HEK293T (cell line): ENCODE measurements at regions of chr17 and their contacts with region 1.

Region 1: DNA sequence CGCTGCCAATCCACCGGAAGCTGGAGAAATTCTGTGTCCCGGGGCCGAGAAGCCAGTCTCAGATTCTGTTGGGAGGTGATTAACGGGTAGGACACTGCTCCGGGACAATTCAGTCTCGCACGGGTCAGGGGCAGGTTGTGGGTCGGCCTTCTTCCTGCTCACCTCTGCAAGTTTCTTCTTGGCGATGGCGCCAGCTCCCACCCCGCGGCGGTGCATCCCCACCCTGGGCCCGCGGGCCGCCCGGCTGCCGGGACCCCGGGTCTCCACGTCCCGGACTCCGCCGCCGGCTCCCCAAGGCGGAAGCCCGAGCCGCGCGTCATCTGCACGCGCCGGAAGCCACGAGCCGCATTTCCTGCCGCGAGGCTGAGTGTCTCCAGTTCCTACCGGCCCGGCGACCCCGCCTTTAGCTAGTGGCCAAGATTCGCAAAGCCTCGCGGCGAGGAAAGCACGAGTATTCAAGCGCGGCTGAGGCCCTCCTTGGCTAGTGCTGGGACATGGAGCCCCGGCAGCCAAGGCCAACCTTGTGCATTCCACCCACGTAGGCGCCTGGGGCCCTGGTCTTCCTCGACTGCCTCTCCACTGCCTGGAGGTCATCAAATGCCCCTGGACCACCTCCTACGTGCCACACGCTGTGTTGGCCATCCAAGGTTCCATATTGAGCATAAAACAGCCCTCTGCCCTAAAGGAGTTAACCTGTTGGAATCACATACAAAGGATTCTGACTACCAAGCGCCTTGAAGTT is at the start of gene SNF8:
- DNase-seq: peak; percentile 97

Region 2: GRCh38 chr17:48756830-48757251 is 187.8 kb before region 1 on chr17:
- CTCF ChIA-PET with region 1: no interaction called
- POLR2A ChIA-PET with region 1: no interaction called
- DNase-seq: peak; percentile 5

Region 3: GRCh38 chr17:48825446-48826381 is 119.0 kb before region 1 on chr17:
- CTCF ChIA-PET with region 1: no interaction called
- POLR2A ChIA-PET with region 1: no interaction called
- DNase-seq: no peak

Region 4: DNA sequence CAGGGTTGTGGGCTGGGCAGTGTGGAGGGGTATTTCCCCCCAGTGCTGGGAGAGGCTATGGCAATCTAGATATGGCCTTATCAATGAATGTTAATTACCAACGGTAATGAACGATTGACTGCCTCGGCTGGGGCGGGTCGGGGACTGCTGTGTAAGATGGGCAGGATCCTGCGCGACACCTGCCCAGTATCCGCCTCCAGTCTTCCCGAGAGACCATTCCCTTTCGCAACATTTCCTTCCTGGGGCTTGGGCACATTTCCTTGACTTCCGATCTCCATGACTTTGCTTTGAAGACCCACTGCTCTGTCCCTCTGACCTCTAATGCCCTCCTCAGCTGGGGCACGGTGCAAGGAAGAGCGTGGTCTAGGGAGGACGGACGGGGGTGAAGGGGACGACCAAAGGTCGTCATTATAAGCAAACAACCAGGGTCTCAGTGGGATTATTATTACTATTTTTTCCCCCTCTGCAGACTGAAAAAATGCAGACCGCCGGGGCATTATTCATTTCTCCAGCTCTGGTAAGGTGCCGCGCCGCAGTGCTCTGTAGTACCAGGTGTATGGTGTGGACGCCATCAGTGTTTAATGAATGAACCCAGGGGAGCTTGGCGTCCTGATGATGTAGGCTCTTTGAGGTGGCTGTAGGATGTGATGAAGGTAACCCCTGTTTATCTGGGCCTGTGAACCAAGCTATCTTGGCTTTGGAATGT is 51.6 kb before region 1 on chr17:
- CTCF ChIA-PET with region 1: no interaction called
- POLR2A ChIA-PET with region 1: interaction called, 13 read pairs
- DNase-seq: no peak

Region 5: GRCh38 chr17:48908047-48908843 is 36.4 kb before region 1 on chr17 and contains the start of gene UBE2Z:
- CTCF ChIA-PET with region 1: no interaction called
- POLR2A ChIA-PET with region 1: interaction called, 15 read pairs
- DNase-seq: peak; percentile 95

Region 6: GRCh38 chr17:48928876-48929811 is 15.5 kb before region 1 on chr17:
- CTCF ChIA-PET with region 1: no interaction called
- POLR2A ChIA-PET with region 1: interaction called, 10 read pairs
- DNase-seq: no peak

Region 7: DNA sequence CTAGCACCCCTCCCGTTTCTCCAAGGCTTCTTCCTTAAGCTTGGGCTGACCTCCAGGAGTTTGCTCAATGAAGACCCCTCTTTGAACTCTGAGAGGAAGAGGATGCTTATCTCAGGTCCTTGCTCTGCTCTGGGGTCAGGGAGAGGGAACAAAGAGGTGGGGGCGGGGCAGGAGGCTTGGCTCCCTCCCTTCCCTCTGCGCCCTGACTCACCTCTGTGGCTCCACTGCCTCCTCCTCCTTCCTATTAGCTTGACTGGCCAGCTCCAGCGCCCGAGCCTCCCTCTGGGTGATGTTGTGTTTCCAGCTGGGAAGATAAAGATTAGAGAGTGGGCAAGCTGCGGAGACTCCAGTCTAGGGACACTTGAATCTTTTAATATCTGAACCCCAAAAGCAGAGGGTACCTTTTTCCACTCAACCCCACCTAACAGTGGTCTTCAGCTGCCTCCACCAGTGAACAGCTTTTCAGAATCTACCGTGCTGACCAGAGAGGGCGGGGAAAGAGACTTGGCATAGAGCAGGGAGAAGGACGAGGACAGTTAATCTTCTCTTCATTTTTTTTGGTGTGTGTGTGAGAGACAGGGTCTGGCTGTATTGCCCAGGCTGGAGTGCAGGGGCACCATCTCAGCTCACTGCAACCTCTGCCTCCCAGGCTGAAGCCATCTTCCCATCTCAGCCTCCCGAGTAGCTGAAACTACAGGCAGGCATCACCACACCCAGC is 17.0 kb after region 1 on chr17:
- CTCF ChIA-PET with region 1: no interaction called
- POLR2A ChIA-PET with region 1: interaction called, 16 read pairs
- DNase-seq: no peak

Region 8: GRCh38 chr17:49012769-49013255 is 68.1 kb after region 1 on chr17:
- CTCF ChIA-PET with region 1: no interaction called
- POLR2A ChIA-PET with region 1: no interaction called
- DNase-seq: no peak

Region 9: GRCh38 chr17:49031965-49032928 is 87.6 kb after region 1 on chr17:
- CTCF ChIA-PET with region 1: interaction called, 9 read pairs
- POLR2A ChIA-PET with region 1: interaction called, 12 read pairs
- DNase-seq: peak; percentile 89

Region 10: GRCh38 chr17:49071106-49071505 is 126.4 kb after region 1 on chr17:
- CTCF ChIA-PET with region 1: no interaction called
- POLR2A ChIA-PET with region 1: no interaction called
- DNase-seq: no peak